ENCODE measurements at regions of chr9 and their contacts with region 1.

Region 1: GRCh38 chr9:6681147-6681956 is 35.8 kb upstream of the GLDC start:
- DNase-seq: peak; percentile 95
- ATAC-seq: peak; percentile 94
- H3K4me3 Mint-ChIP-seq: peak overlapping the region; percentile 95
- H3K27ac Mint-ChIP-seq: peak overlapping the region; percentile 100
- H3K4me1 Mint-ChIP-seq: peaks cover 22% of the 10 kb centered on the region
- H3K27me3 Mint-ChIP-seq: no peaks in the 10 kb centered on the region

Region 2: DNA sequence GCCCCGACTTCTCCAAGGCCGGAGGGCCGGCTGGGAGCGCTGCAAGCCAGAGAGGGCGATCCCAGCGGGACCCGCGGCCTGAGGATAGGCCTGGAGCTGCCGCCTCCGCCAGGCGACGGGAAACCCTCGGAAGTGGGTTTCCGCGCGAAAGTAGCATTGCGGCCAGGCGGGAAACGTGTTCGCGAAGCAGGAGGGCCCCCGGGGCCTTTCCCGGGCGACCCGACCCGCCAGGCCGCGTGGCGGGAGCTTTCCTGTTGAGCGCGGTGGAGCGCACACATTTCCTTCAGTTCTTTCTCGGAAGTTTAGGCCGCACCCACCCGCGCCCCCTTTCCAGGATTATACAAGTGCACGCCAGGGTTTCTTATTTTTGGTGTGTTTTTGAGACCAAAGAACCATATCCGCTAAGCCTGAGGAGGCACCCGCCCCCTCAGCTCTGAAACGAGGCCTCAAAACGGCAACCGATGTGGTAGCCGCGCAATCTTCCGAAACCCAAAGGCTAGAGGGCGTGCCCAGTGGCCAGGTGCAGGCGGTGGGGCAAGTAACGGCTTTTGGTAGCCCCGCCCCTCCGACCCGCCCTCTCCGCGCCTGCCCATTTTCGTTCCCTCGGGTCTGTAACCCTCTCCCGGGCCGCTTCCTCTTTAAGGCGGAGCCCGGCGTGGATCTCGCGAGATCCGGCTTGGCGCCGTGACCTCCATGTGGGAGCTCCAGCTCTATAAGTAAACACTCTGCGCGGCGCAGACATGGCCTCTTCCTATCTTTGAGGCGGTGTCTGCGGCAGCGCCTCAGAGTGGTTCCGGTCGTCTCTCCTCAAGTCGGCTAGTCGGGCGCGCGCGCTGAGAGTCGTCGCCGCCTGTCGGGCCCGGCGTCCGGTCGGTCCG is 268.6 kb before region 1 on chr9 and contains the start of gene UHRF2:
- CTCF ChIA-PET with region 1: no interaction called
- POLR2A ChIA-PET with region 1: interaction called, 10 read pairs
- DNase-seq: peak; percentile 100
- ATAC-seq: peak; percentile 91
- H3K4me3 Mint-ChIP-seq: peak within 1 kb of the TSS; percentile 86
- H3K27ac Mint-ChIP-seq: peak within 1 kb of the TSS; percentile 95
- H3K4me1 Mint-ChIP-seq: peaks cover 32% of the 10 kb centered on the region
- H3K27me3 Mint-ChIP-seq: peaks cover 22% of the 10 kb centered on the region
- total RNA-seq, gene UHRF2: 59.3 to 68.6 TPM

Region 3: GRCh38 chr9:6703898-6704639 is 22.7 kb after region 1 on chr9:
- CTCF ChIA-PET with region 1: no interaction called
- POLR2A ChIA-PET with region 1: interaction called, 31 read pairs
- DNase-seq: peak; percentile 91
- ATAC-seq: peak; percentile 91
- H3K4me3 Mint-ChIP-seq: peak overlapping the region; percentile 91
- H3K27ac Mint-ChIP-seq: peak overlapping the region; percentile 95
- H3K4me1 Mint-ChIP-seq: peaks cover 14% of the 10 kb centered on the region
- H3K27me3 Mint-ChIP-seq: peaks cover 5% of the 10 kb centered on the region

Region 4: DNA sequence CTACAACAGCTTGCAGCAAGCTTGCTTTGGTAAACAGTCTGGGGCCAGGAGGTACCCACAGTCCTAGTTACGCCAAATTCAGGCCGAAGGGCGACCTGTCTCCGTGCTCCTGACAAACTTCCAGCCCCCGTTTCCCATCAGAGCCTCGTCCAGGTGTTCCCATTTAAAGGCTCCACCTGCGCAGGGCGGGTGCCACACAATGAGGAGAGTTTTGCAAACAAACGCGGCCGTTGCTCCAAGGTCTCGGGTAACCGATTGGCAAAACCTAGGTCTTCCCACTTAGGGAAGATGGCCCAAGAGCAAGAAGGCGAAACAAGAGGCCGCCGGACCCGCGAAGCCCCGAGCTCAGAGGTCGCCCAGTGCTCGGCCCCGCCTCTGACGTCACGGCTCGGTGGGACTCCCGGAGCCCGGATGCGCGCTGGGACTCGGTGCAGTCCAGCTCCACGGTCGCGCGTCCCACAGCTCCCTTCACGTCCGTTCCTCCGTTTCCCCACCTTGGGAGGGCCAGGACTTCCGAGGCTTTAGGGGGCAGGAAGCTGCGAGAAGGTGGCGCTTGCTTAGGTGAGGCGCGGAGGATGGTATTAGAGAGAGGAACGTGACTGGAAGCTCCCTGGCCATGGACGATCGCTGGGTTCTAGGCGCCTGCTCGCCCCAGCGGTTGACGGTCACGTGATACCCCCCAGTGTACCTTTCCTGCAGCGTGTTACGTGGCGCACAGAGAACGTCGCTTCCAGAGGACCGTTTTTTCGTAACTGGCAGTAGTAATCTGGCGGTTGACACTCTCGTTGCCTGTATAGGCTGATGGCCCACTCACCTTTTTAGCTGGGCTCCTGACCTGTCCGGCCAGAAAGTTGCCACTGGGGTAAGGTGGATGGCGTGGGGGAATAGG is 34.6 kb after region 1 on chr9:
- CTCF ChIA-PET with region 1: no interaction called
- POLR2A ChIA-PET with region 1: interaction called, 18 read pairs
- DNase-seq: peak; percentile 84
- ATAC-seq: peak; percentile 94
- H3K4me3 Mint-ChIP-seq: peak overlapping the region; percentile 82
- H3K27ac Mint-ChIP-seq: peak overlapping the region; percentile 92
- H3K4me1 Mint-ChIP-seq: peaks cover 6% of the 10 kb centered on the region
- H3K27me3 Mint-ChIP-seq: peaks cover 2% of the 10 kb centered on the region

Measured in activated CD8-positive, alpha-beta T cell treated with anti-CD3 and anti-CD28 coated beads, Interleukin-2, amount 10 ng/mL, durations not matched to agents 7 days and 5 days (primary cell).